Activated CD4-positive, alpha-beta T cell treated with anti-CD3 and anti-CD28 coated beads, Interleukin-2, amount 10 ng/mL, durations not matched to agents 24 days and 14 days (primary cell): ENCODE measurements at regions of chr17 and their contacts with region 1.

Region 1: DNA sequence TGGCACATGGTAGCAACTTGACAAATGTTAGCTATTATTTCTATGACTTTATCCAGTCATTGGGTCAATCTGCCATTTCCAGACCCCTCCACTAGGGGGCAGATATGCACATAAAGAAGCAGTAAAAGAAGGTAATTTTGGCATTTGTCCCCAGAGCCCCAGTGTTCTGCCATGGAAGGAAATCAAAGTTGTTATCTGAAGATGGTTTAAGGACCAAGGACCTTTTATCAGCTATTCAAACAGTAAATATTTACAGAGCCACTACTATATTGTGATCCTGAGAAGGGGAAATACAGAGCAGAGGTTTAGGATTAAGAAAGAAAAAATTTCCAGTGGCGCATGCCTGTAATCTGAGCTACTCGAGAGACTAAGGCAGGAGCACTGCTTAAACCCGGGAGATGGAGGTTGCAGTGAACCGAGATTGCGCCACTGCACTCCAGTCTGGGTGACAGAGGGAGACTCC is 20.0 kb downstream of the TRAF4 start:
- DNase-seq: peak; percentile 93
- H3K4me3 Mint-ChIP-seq: no peak overlapping the region
- H3K27ac Mint-ChIP-seq: no peak overlapping the region
- H3K4me1 Mint-ChIP-seq: peaks cover 15% of the 10 kb centered on the region
- H3K27me3 Mint-ChIP-seq: no peaks in the 10 kb centered on the region

Region 2: DNA sequence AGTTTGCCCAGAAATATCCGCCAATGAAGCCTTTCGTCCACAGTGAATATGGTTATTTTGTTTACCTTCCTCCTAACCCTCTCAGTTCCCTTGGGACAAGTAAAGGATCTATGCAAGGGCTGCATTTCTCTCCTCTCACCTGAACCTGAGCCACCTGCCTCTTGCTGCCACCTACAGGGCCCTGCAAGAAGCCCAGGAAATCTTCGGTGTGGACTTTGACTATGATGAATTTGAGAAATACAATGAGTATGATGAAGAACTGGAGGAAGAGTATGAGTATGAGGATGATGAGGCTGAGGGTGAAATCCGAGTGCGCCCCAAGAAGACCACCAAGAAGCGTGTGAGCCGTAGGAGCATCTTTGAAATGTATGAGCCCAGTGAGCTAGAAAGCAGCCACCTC is 87.9 kb before region 1 on chr17:
- intact Hi-C with region 1: no loop called
- DNase-seq: peak; percentile 66
- H3K4me3 Mint-ChIP-seq: no peak overlapping the region
- H3K27ac Mint-ChIP-seq: no peak overlapping the region
- H3K4me1 Mint-ChIP-seq: no peaks in the 10 kb centered on the region
- H3K27me3 Mint-ChIP-seq: no peaks in the 10 kb centered on the region

Region 3: GRCh38 chr17:28854457-28855350 is 90.9 kb after region 1 on chr17 and contains the start of gene ERAL1:
- intact Hi-C with region 1: loop called (anchors 1 kb)
- DNase-seq: peak; percentile 96
- H3K4me3 Mint-ChIP-seq: peak within 1 kb of the TSS; percentile 82
- H3K27ac Mint-ChIP-seq: peak within 1 kb of the TSS; percentile 85
- H3K4me1 Mint-ChIP-seq: peaks cover 19% of the 10 kb centered on the region
- H3K27me3 Mint-ChIP-seq: no peaks in the 10 kb centered on the region
- total RNA-seq, gene ERAL1: 56.8 and 61.2 TPM in 2 replicates